ENCODE measurements at regions of chr7 and their contacts with region 1.

Region 1: GRCh38 chr7:137898839-137899721 is 52.3 kb upstream of the DGKI start:
- DNase-seq: peak; percentile 44
- H3K4me3 ChIP-seq: peak overlapping the region in 1 of 3 experiments; percentile 28
- H3K27ac ChIP-seq: no peak overlapping the region
- H3K4me1 ChIP-seq: no peaks in the 10 kb centered on the region
- H3K27me3 ChIP-seq: no peaks in the 10 kb centered on the region
- CTCF ChIP-seq: peak; percentile 91 to 97

Region 2: DNA sequence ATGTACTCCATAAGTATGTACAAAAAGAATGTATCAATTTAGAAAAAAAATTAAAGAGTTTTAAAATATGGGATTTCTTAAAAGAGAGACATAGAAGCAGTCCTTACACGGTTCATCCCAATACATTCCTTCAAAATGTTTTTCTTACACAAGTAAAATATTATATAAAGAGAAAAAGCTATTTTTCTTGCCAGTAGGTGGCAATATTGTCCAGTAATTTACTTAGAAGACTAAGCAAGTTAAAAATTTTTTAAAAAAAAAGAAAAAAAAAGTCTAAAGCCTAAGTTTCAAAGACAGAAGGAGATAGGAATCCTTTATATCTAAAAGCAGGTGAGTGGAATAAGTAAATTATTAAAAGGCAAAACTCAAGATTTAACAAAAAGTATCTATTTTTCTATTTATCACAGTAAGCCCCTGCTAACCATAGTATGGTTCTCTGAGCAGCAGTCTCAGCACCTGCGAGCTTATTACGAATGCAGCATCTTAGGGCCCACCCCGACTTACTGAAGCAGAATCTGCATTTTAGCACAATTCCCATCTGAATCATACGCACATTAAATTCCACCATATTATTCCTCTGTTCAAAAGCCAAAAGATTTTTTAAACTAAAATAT is 292.9 kb before region 1 on chr7:
- CTCF ChIA-PET with region 1: no interaction called
- dilution Hi-C with region 1: no loop called
- in situ Hi-C with region 1: no loop called
- intact Hi-C with region 1: loop called (anchors 2 kb)
- DNase-seq: peak; percentile 25
- H3K4me3 ChIP-seq: no peak overlapping the region
- H3K27ac ChIP-seq: no peak overlapping the region
- H3K4me1 ChIP-seq: no peaks in the 10 kb centered on the region
- H3K27me3 ChIP-seq: peaks cover 10% of the 10 kb centered on the region
- CTCF ChIP-seq: peak; percentile 13 to 39

Region 3: GRCh38 chr7:137734226-137734625 is 164.9 kb before region 1 on chr7:
- CTCF ChIA-PET with region 1: no interaction called
- dilution Hi-C with region 1: no loop called
- in situ Hi-C with region 1: no loop called
- intact Hi-C with region 1: no loop called
- DNase-seq: no peak
- H3K4me3 ChIP-seq: no peak overlapping the region
- H3K27ac ChIP-seq: no peak overlapping the region
- H3K4me1 ChIP-seq: no peaks in the 10 kb centered on the region
- H3K27me3 ChIP-seq: no peaks in the 10 kb centered on the region
- CTCF ChIP-seq: no peak

Region 4: DNA sequence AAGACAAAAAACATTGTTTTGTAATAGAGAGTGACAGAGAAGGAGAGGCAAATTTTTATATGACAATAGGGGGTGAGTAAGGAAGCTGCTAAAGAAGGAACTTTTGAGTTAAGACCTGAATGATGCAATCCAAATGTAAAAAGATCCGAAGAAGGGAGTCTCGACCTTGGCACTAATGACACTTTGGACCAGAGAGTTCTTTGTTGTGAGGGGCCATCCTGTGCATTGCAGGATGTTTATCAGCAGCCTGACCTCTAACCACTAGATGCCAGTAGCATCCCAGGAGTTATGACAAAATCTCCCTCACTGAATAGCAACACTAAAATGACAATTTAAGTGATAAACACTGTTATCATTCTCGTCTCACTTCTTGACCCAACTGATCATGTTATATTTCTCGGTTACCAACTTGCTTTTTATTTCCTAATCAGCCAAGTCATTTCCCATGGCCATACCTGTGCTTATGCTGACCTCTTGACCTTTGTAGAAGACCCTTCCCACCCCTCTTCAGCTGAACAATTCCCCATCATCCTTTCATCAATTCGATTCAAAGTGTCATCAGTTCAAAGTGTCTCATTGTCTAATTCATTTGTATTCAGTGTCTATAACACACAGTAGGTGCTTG is 82.3 kb before region 1 on chr7:
- CTCF ChIA-PET with region 1: no interaction called
- dilution Hi-C with region 1: no loop called
- in situ Hi-C with region 1: no loop called
- intact Hi-C with region 1: loop called (anchors 1 kb)
- DNase-seq: no peak
- H3K4me3 ChIP-seq: no peak overlapping the region
- H3K27ac ChIP-seq: no peak overlapping the region
- H3K4me1 ChIP-seq: no peaks in the 10 kb centered on the region
- H3K27me3 ChIP-seq: no peaks in the 10 kb centered on the region
- CTCF ChIP-seq: peak in 1 of 2 donors; percentile 58

Region 5: DNA sequence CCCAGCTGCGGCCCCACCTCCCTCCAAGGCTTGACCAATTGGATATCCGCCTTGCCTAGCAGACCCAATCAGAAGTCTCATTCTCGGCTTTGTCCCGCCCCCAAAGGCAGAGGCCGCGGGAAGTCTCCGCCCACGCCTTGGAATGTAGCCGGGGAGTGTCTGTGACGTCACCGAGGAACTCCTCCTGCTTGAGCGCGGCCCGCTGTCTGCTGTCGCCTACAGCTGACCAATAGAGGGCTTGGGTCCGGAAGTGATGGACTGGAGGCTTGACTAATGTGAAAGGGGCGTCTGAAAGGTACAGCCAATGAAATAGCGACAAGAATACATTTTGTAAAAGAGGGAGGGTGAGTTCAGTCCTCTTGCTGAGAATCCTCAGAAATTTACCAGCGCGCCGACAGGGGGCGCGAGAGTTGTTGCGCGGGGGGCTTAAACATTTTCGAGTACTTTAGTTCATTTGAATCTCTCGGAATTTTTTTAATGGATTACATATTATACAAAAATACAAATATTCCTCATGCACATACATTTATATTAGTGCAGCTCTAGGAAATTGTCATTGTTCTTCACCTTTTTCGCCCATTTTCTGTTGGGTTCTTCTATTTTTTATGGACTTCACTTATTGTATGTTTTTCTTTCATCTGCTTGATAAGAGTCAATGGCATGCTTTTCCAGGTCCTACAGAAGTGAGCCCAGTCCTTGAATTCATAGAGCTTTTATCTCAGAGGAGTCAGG is 103.2 kb after region 1 on chr7:
- CTCF ChIA-PET with region 1: interaction called, 6 read pairs
- dilution Hi-C with region 1: no loop called
- in situ Hi-C with region 1: loop called in 1 of 2 experiments (anchors 10 kb)
- intact Hi-C with region 1: no loop called
- DNase-seq: peak; percentile 100
- H3K4me3 ChIP-seq: peak overlapping the region; percentile 91 to 98 (median 94)
- H3K27ac ChIP-seq: peak overlapping the region; percentile 87
- H3K4me1 ChIP-seq: peaks cover 25% of the 10 kb centered on the region
- H3K27me3 ChIP-seq: no peaks in the 10 kb centered on the region
- CTCF ChIP-seq: peak; percentile 79 to 81

Region 6: GRCh38 chr7:138161600-138162081 is 262.6 kb after region 1 on chr7:
- CTCF ChIA-PET with region 1: no interaction called
- dilution Hi-C with region 1: no loop called
- in situ Hi-C with region 1: no loop called
- intact Hi-C with region 1: loop called (anchors 5 kb)
- DNase-seq: peak; percentile 77
- H3K4me3 ChIP-seq: no peak overlapping the region
- H3K27ac ChIP-seq: no peak overlapping the region
- H3K4me1 ChIP-seq: no peaks in the 10 kb centered on the region
- H3K27me3 ChIP-seq: no peaks in the 10 kb centered on the region
- CTCF ChIP-seq: peak; percentile 55 to 87

Region 7: DNA sequence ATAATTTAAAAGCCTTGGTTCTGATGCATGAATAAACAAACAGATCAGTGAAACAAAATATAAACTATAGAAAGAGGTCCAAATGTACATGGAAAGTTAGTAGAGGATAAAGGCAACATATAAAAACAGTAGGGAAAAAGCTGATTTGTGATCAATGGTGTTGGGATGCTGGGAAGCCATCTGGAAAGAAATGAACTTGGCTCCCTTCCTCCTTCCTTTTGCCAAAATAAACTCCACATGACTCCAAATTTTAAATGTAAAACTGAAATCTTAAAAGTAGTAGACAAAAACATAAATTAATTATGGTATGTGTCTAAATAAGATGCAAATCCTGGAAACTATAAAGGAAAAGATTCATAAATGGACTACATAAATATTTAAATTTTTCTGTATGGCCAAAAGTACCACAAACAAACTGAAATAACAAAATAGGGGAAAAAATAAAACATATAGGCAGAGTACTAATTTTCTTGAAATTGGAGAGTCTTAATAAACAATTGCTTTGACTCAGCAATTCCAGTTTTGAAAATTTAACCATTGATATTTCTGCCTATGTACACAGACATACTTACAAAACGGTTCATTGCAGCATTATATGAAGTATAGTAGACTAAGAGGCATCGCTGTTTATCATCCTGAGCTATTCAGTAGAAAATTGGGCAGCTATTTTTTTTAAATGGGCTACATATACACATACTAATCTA is 483.9 kb after region 1 on chr7:
- CTCF ChIA-PET with region 1: no interaction called
- dilution Hi-C with region 1: no loop called
- in situ Hi-C with region 1: no loop called
- intact Hi-C with region 1: no loop called
- DNase-seq: no peak
- H3K4me3 ChIP-seq: no peak overlapping the region
- H3K27ac ChIP-seq: no peak overlapping the region
- H3K4me1 ChIP-seq: no peaks in the 10 kb centered on the region
- H3K27me3 ChIP-seq: no peaks in the 10 kb centered on the region
- CTCF ChIP-seq: no peak

Region 8: GRCh38 chr7:138738551-138739335 is 839.7 kb after region 1 on chr7:
- CTCF ChIA-PET with region 1: no interaction called
- dilution Hi-C with region 1: no loop called
- in situ Hi-C with region 1: loop called in 1 of 2 experiments (anchors 25 kb)
- intact Hi-C with region 1: loop called (anchors 1 kb)
- DNase-seq: peak; percentile 74
- H3K4me3 ChIP-seq: no peak overlapping the region
- H3K27ac ChIP-seq: no peak overlapping the region
- H3K4me1 ChIP-seq: peaks cover 16% of the 10 kb centered on the region
- H3K27me3 ChIP-seq: no peaks in the 10 kb centered on the region
- CTCF ChIP-seq: peak; percentile 92 to 98